HepG2 (cell line): ENCODE measurements at regions of chr9 and their contacts with region 1.

Region 1: DNA sequence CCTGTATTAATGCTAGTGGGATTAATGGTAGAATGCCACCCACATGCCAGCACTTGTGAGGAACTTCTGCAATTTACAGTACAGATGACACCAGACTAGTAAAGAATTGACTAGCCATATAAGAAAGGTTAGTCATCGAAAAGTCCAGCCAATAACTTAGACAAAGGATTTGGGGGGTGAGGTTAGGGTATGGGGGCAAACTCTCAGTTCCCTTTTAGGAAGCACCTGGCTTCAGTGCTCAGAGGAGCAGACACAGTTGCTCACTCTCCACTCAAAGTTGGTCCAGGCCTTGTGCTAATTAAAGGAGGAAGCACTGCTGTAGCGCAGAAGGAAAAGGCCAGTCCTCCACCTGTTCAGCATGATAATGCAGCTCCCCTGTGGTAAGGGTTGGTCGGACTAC is 25.2 kb downstream of the TGFBR1 start:
- DNase-seq: no peak
- ATAC-seq: no peak
- H3K4me3 ChIP-seq: no peak overlapping the region
- H3K27ac ChIP-seq: no peak overlapping the region
- H3K4me1 ChIP-seq: no peaks in the 10 kb centered on the region
- H3K27me3 ChIP-seq: no peaks in the 10 kb centered on the region
- CTCF ChIP-seq: no peak
- EP300 ChIP-seq: no peak
- POLR2A ChIP-seq: no peak
- RAD21 ChIP-seq: no peak

Region 2: GRCh38 chr9:98998441-98999151 is 131.5 kb before region 1 on chr9:
- CTCF ChIA-PET with region 1: no interaction called
- POLR2A ChIA-PET with region 1: no interaction called
- in situ Hi-C with region 1: loop called (anchors 5 kb)
- intact Hi-C with region 1: no loop called
- DNase-seq: peak; percentile 20
- ATAC-seq: peak; percentile 97
- H3K4me3 ChIP-seq: no peak overlapping the region
- H3K27ac ChIP-seq: no peak overlapping the region
- H3K4me1 ChIP-seq: no peaks in the 10 kb centered on the region
- H3K27me3 ChIP-seq: peaks cover 0 to 9% of the 10 kb centered on the region in 2 experiments; a peak in 1 of 5 replicates
- CTCF ChIP-seq: peak; percentile 92
- EP300 ChIP-seq: no peak
- POLR2A ChIP-seq: no peak
- RAD21 ChIP-seq: peak; percentile 53; the same call in 1 of the 2 replicates

Region 3: GRCh38 chr9:99296291-99296951 is 166.4 kb after region 1 on chr9:
- CTCF ChIA-PET with region 1: no interaction called
- POLR2A ChIA-PET with region 1: no interaction called
- in situ Hi-C with region 1: no loop called
- intact Hi-C with region 1: no loop called
- DNase-seq: no peak
- ATAC-seq: no peak
- H3K4me3 ChIP-seq: no peak overlapping the region
- H3K27ac ChIP-seq: no peak overlapping the region
- H3K4me1 ChIP-seq: no peaks in the 10 kb centered on the region
- H3K27me3 ChIP-seq: peaks cover 3 to 9% of the 10 kb centered on the region in 2 experiments; a peak in 3 of 5 replicates
- CTCF ChIP-seq: no peak
- EP300 ChIP-seq: no peak
- POLR2A ChIP-seq: no peak
- RAD21 ChIP-seq: no peak